RWPE1 (cell line): ENCODE measurements at regions of chr1 and their contacts with region 1.

Region 1: DNA sequence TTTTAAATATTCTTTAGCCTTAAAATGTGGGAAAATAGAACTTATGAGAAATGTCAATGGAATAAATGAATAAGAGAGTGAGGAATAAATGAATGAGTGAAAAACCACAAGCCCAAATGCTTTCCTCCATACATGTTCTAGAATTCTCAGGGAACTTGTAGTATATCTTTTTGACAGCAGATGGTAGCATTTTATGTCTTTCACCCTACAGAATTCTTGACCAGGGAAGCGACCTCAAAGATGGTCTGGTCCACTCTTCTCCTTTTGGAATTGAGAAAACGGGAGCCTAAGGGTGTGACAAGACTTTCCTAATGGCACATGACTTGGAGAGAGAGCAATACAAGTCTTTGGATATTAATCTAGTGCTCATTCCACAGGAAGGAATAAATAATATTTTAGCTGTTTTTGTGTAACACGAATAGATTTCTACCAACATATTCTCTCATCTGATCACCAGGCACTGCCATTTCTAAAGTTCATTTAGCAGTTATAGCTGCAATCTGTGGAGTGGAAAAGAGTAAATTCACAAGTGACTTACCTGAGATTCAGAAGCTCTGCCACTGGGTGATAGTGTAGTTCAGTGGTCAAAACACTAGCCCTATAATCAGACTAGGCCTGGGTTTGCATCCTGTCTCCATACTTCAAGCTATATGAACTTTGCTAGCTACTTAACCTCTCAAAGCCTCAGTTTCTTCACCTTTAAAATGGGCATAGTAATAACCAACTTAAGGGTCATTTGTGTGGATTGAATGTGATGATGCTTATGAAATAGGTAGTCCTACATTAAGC is 15.0 kb upstream of the F5 start:
- DNase-seq: peak; percentile 34
- H3K27ac ChIP-seq: no peak overlapping the region
- CTCF ChIP-seq: peak; percentile 19; the same call in 1 of the 2 replicates

Region 2: GRCh38 chr1:169630006-169630405 is 28.7 kb after region 1 on chr1 and contains the start of gene SELP:
- CTCF ChIA-PET with region 1: no interaction called
- POLR2A ChIA-PET with region 1: no interaction called
- DNase-seq: no peak
- H3K27ac ChIP-seq: no peak within 1 kb of the TSS
- CTCF ChIP-seq: no peak

Region 3: GRCh38 chr1:169711469-169712281 is 110.4 kb after region 1 on chr1 and contains the start of gene SELL:
- CTCF ChIA-PET with region 1: interaction called, 13 read pairs
- POLR2A ChIA-PET with region 1: no interaction called
- DNase-seq: peak; percentile 57
- H3K27ac ChIP-seq: no peak within 1 kb of the TSS
- CTCF ChIP-seq: peak; percentile 77

Region 4: GRCh38 chr1:169809370-169810095 is 208.2 kb after region 1 on chr1:
- CTCF ChIA-PET with region 1: interaction called, 13 read pairs
- POLR2A ChIA-PET with region 1: no interaction called
- DNase-seq: peak; percentile 26
- H3K27ac ChIP-seq: no peak overlapping the region
- CTCF ChIP-seq: peak; percentile 67